ENCODE measurements at regions of chr1 and their contacts with region 1.

Region 1: DNA sequence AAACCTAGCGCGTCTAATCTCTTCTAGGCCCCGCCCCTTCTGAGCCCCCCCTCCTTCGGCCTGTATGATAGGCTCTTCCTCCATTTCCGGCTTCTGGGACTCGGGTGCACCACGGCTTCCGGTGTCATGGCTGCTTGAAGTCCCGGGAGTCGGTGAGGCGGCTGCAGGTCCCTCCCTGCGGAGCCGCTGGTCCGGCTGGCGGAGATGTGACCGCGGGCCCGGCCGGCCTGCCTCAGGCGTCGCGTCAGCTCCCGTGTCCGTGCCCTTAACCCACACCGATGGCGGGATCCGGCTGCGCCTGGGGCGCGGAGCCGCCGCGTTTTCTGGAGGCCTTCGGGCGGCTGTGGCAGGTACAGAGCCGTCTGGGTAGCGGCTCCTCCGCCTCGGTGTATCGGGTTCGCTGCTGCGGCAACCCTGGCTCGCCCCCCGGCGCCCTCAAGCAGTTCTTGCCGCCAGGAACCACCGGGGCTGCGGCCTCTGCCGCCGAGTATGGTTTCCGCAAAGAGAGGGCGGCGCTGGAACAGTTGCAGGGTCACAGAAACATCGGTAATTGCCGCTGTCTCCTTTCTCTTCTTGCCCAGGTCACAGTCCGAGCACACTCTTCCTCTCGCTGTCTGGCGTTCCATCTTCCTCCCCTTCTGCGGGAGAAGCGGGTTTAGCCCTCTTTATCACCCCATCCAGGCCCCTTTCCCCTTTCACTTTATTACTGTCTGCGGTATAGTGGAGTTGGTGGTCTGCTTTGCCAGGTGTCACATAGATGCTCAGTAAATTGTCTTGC is at the start of gene UHMK1:
- DNase-seq: peak; percentile 96
- total RNA-seq, gene UHMK1: 24.7 TPM

Region 2: GRCh38 chr1:162561037-162561616 is 63.2 kb after region 1 on chr1:
- intact Hi-C with region 1: loop called (anchors 1 kb)
- DNase-seq: peak; percentile 99

Measured in cardiac septum (tissue), 1 donor.